A549 (cell line): ENCODE measurements at regions of chr17 and their contacts with region 1.

Region 1: GRCh38 chr17:64230795-64231408 is 32.2 kb downstream of the TEX2 start:
- DNase-seq: peak in 1 of 2 experiments; percentile 14
- ATAC-seq: peak; percentile 51 to 62; a peak in 5 of 6 replicates
- H3K4me3 ChIP-seq: no peak overlapping the region
- H3K27ac ChIP-seq: peak overlapping the region; percentile 23 to 29; a peak in 2 of 6 replicates
- H3K4me1 ChIP-seq: peaks cover 13% of the 10 kb centered on the region; the same call in 2 of the 3 replicates
- CTCF ChIP-seq: no peak
- EP300 ChIP-seq: no peak
- POLR2A ChIP-seq: no peak
- RAD21 ChIP-seq: no peak

Region 2: DNA sequence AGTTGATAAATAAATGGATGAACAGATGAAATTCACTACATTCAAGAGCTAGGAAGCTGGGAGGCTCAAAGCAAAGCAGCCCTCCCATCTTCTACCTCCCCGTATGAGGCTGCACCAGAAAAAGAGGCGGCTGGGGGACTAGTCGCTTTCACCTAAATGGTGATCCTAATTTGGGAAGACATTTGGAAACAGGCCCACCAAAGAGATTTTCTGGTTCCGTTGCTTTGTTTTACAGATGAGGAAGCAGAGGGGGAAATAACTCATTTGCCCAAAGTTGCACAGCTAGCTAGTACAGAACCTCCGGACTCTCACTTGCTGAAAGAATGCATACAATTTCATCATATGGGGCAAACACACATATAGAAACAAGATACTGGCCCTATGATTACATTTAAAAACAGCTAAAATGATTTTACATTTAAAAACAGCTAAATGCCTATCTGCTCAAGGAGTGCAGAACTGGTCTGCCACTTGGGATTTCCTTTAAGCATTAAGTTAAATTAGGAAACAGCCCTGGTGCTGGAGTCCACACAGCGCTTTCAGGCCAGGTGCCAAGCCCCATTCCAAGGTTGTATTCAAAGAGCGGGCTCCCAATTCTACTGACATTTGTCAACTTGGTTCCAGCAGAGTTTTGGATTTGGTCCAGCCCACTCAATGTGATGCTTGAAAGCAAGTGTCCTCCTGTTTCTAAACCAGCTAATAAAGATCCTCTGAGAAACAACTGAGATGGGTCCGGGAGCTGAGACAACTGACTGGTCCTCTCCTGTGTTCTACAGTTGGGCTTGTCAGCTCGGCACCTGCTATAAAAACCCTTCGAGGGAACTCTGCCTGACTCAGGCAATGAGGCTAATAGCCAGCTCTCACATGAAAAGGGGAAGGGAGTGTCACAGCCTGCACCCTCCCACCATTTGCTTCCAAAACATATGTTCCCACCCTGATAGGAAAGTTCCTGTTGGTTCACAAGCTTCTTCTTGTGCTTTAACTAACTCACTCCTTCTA is 112.6 kb before region 1 on chr17:
- CTCF ChIA-PET with region 1: no interaction called
- POLR2A ChIA-PET with region 1: no interaction called
- DNase-seq: no peak
- ATAC-seq: no peak
- H3K4me3 ChIP-seq: no peak overlapping the region
- H3K27ac ChIP-seq: no peak overlapping the region
- H3K4me1 ChIP-seq: peaks cover 57% of the 10 kb centered on the region
- CTCF ChIP-seq: no peak
- EP300 ChIP-seq: no peak
- POLR2A ChIP-seq: no peak
- RAD21 ChIP-seq: no peak

Region 3: GRCh38 chr17:64174686-64175456 is 56.0 kb before region 1 on chr17:
- CTCF ChIA-PET with region 1: no interaction called
- POLR2A ChIA-PET with region 1: no interaction called
- DNase-seq: no peak
- ATAC-seq: no peak
- H3K4me3 ChIP-seq: no peak overlapping the region
- H3K27ac ChIP-seq: no peak overlapping the region
- H3K4me1 ChIP-seq: no peaks in the 10 kb centered on the region
- CTCF ChIP-seq: no peak
- EP300 ChIP-seq: no peak
- POLR2A ChIP-seq: no peak
- RAD21 ChIP-seq: no peak

Region 4: GRCh38 chr17:64216338-64217248 is 14.3 kb before region 1 on chr17:
- CTCF ChIA-PET with region 1: interaction called, 14 read pairs
- POLR2A ChIA-PET with region 1: no interaction called
- DNase-seq: no peak
- ATAC-seq: peak; percentile 56 to 59; a peak in 4 of 6 replicates
- H3K4me3 ChIP-seq: no peak overlapping the region
- H3K27ac ChIP-seq: no peak overlapping the region
- H3K4me1 ChIP-seq: no peaks in the 10 kb centered on the region
- CTCF ChIP-seq: no peak
- EP300 ChIP-seq: no peak
- POLR2A ChIP-seq: no peak
- RAD21 ChIP-seq: no peak